ENCODE measurements at regions of chr11 and their contacts with region 1.

Region 1: GRCh38 chr11:447923-448731 is 2.0 kb upstream of the PTDSS2 start:
- DNase-seq: peak; percentile 95 to 96 (median 95)
- ATAC-seq: peak; percentile 78
- H3K4me3 ChIP-seq: peak overlapping the region; percentile 76
- H3K27ac ChIP-seq: peak overlapping the region; percentile 93
- H3K4me1 ChIP-seq: peaks cover 33 to 79% of the 10 kb centered on the region in 2 experiments; a peak in 4 of 5 replicates
- H3K27me3 ChIP-seq: no peaks in the 10 kb centered on the region
- CTCF ChIP-seq: peak; percentile 91 to 94 (median 91)
- EP300 ChIP-seq: no peak
- POLR2A ChIP-seq: peak; percentile 84
- RAD21 ChIP-seq: peak; percentile 80 to 84

Region 2: DNA sequence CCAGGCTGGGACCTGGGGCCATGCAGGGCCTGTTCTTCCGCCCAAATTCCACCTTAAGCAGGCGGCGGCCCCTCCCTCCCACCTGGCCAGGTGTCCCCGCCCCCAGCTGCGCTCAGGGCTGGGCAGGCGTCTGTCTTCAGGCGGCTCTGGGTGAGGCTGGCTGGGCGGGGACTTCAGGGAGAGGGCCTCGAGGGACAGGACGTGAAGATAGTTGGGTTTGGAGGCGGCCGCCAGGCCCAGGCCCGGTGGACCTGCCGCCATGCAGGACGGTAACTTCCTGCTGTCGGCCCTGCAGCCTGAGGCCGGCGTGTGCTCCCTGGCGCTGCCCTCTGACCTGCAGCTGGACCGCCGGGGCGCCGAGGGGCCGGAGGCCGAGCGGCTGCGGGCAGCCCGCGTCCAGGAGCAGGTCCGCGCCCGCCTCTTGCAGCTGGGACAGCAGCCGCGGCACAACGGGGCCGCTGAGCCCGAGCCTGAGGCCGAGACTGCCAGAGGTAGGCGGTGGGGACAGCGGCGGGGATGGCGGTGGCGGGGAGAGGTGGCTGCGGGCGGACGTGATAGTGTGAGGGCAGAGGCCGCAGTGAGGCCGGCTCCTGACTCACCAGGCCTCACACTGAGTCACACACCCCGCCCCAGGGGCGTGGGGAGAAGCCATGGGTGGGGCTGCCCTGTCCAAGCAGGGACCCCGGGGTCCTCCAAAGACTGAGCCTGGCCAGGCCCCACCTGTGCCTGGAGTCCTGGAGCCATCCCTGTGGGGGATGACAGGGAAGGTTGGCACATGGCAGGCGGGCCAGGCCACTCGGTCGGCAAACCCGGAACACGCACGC is 53.9 kb before region 1 on chr11 and contains the start of gene PKP3:
- CTCF ChIA-PET with region 1: no interaction called
- POLR2A ChIA-PET with region 1: interaction called, 3 read pairs
- in situ Hi-C with region 1: no loop called
- intact Hi-C with region 1: loop called (anchors 5 kb)
- DNase-seq: peak; percentile 86 to 89 (median 88)
- ATAC-seq: peak; percentile 88
- H3K4me3 ChIP-seq: peak within 1 kb of the TSS; percentile 67
- H3K27ac ChIP-seq: peak within 1 kb of the TSS; percentile 93
- H3K4me1 ChIP-seq: peaks cover 22 to 75% of the 10 kb centered on the region in 2 experiments
- H3K27me3 ChIP-seq: no peaks in the 10 kb centered on the region
- CTCF ChIP-seq: no peak
- EP300 ChIP-seq: no peak
- POLR2A ChIP-seq: peak; percentile 81
- RAD21 ChIP-seq: no peak
- polyA plus RNA-seq, gene PKP3: 0.11 to 0.45 TPM

Region 3: GRCh38 chr11:406978-407739 is 41.0 kb before region 1 on chr11:
- CTCF ChIA-PET with region 1: no interaction called
- POLR2A ChIA-PET with region 1: interaction called, 3 read pairs
- in situ Hi-C with region 1: no loop called
- intact Hi-C with region 1: loop called (anchors 2 kb)
- DNase-seq: peak; percentile 94 to 97 (median 95)
- ATAC-seq: peak; percentile 89
- H3K4me3 ChIP-seq: peak overlapping the region; percentile 52
- H3K27ac ChIP-seq: peak overlapping the region; percentile 87
- H3K4me1 ChIP-seq: peaks cover 6 to 60% of the 10 kb centered on the region in 2 experiments; a peak in 3 of 5 replicates
- H3K27me3 ChIP-seq: no peaks in the 10 kb centered on the region
- CTCF ChIP-seq: no peak
- EP300 ChIP-seq: no peak
- POLR2A ChIP-seq: no peak
- RAD21 ChIP-seq: no peak; a peak in 1 of 4 replicates

Region 4: DNA sequence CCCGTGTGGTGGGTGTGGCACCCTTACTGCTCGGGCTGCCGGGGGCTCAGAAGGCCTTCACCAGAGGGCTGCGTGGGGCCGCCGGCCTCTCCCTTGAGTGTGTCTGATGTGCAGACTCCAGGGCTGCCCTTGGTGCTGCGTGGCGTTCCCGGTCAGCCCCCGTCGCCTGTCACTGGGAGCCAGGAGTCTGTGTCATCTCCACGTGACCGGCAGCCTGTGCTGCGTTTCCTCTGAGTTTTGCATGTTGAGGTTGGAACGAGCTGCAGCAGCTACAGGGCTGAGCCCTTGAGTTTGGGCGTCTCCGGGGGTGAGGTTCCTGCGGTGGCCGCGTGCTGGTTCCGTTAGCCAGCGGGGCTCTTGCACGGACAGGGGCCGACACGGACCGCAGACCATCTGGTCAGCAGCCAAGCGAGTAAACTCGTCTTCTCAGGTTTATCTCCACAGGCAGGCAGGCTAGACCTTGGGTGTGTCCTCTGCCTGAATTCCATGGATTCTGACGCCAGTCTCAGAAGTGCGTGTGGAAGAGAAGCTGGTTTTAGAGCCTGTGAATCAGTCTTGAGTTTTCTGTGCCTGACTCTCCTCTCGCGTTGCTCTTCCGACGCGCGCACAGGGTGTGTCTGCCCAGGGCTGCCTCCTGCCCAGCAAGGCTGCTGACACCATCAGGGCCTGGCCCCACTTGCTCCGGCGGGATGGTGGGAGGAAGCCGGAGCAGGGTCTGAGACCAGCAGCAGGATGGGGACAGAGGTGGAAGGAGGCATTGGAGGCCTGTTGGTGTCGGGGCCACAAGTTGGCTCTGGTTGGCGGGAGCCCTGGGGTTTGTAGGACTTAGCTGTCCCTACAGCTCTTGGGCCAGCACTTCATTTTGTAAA is 12.4 kb after region 1 on chr11:
- CTCF ChIA-PET with region 1: no interaction called
- POLR2A ChIA-PET with region 1: interaction called, 16 read pairs
- in situ Hi-C with region 1: no loop called
- intact Hi-C with region 1: no loop called
- DNase-seq: peak; percentile 70 to 95 (median 82)
- ATAC-seq: peak; percentile 96
- H3K4me3 ChIP-seq: peak overlapping the region; percentile 16; the same call in 1 of the 2 replicates
- H3K27ac ChIP-seq: peak overlapping the region; percentile 81
- H3K4me1 ChIP-seq: peaks cover 27 to 55% of the 10 kb centered on the region in 2 experiments
- H3K27me3 ChIP-seq: no peaks in the 10 kb centered on the region
- CTCF ChIP-seq: peak in 1 of 3 experiments; percentile 23; a peak in 1 of 6 replicates
- EP300 ChIP-seq: peak; percentile 78
- POLR2A ChIP-seq: no peak
- RAD21 ChIP-seq: peak in 1 of 2 experiments; percentile 23; a peak in 1 of 4 replicates

Region 5: GRCh38 chr11:506238-506994 is 58.3 kb after region 1 on chr11:
- CTCF ChIA-PET with region 1: no interaction called
- POLR2A ChIA-PET with region 1: interaction called, 10 read pairs
- in situ Hi-C with region 1: loop called (anchors 5 kb)
- intact Hi-C with region 1: loop called (anchors 2 kb)
- DNase-seq: peak; percentile 92 to 99 (median 94)
- ATAC-seq: peak; percentile 76
- H3K4me3 ChIP-seq: peak overlapping the region; percentile 93
- H3K27ac ChIP-seq: peak overlapping the region; percentile 98
- H3K4me1 ChIP-seq: peaks cover 11 to 58% of the 10 kb centered on the region in 2 experiments
- H3K27me3 ChIP-seq: no peaks in the 10 kb centered on the region
- CTCF ChIP-seq: 0 out of 6 replicates have a peak, but pooled peaks of 1 of the 3 experiments have one; percentile 10
- EP300 ChIP-seq: no peak
- POLR2A ChIP-seq: peak; percentile 95
- RAD21 ChIP-seq: peak in 1 of 2 experiments; percentile 9; a peak in 1 of 4 replicates